Ascending aorta (tissue), 2 donors: ENCODE measurements at regions of chr7 and their contacts with region 1.

Region 1: DNA sequence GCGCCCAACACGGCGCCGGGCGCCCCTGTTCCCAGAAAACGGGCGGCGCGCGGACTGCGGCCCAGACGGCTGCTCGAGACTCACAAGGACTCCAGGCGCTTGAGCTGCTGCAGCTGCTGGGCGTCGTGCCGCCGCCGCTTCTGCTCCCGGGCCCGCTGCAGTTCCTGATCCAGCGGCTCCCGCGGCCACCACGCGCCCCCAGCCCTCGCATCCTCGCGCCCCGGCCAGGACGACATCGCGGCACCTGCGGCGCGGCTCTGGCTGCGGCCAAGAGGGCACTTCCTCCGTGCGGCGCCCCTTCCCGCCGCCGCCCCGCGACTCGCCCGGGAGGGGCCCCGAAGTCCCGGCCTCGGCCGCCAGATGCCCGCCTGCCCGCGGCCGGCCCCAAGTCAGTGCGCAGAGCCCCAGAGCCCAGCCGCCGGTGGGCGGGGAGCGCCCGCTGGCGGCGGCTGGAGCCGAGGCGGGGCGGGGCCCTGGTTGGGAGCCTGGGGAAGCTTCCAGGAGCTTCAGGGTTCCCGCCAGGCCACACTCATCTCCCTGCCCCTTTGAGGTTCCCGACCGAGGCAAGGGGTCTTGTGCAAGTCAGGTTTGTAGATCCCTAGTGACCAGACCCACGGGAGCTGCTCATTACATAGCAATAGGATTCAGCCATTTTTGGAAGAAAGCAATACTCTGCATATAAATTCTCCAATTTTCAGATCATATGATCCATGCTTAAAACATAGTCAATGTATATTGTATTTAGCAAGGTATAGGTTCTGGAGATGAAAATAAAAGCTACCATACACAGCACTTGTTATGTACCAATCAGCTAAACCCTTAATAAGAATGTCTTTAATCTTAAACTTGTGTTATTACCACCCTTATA is 14.2 kb upstream of the FKBP9 start:
- DNase-seq: peak; percentile 45 to 89
- H3K4me3 ChIP-seq: peak overlapping the region; percentile 92 to 100
- H3K27ac ChIP-seq: peak overlapping the region; percentile 88 to 98
- H3K4me1 ChIP-seq: peaks cover 3 to 10% of the 10 kb centered on the region in 2 donors
- H3K27me3 ChIP-seq: no peaks in the 10 kb centered on the region
- CTCF ChIP-seq: peak; percentile 38 to 75 (median 64)

Region 2: GRCh38 chr7:32495298-32496176 is 447.5 kb before region 1 on chr7 and contains the start of gene AVL9:
- intact Hi-C with region 1: loop called (anchors 5 kb)
- DNase-seq: peak; percentile 96 to 99
- H3K4me3 ChIP-seq: peak within 1 kb of the TSS; percentile 82 to 97
- H3K27ac ChIP-seq: peak within 1 kb of the TSS; percentile 98 to 99
- H3K4me1 ChIP-seq: peaks cover 7 to 13% of the 10 kb centered on the region in 2 donors
- H3K27me3 ChIP-seq: no peaks in the 10 kb centered on the region
- CTCF ChIP-seq: no peak
- total RNA-seq, gene AVL9: 78.3 TPM

Region 3: GRCh38 chr7:32803406-32804141 is 139.4 kb before region 1 on chr7:
- intact Hi-C with region 1: loop called (anchors 2 kb)
- DNase-seq: no peak
- H3K4me3 ChIP-seq: no peak overlapping the region
- H3K27ac ChIP-seq: no peak overlapping the region
- H3K4me1 ChIP-seq: no peaks in the 10 kb centered on the region
- H3K27me3 ChIP-seq: no peaks in the 10 kb centered on the region
- CTCF ChIP-seq: no peak

Region 4: DNA sequence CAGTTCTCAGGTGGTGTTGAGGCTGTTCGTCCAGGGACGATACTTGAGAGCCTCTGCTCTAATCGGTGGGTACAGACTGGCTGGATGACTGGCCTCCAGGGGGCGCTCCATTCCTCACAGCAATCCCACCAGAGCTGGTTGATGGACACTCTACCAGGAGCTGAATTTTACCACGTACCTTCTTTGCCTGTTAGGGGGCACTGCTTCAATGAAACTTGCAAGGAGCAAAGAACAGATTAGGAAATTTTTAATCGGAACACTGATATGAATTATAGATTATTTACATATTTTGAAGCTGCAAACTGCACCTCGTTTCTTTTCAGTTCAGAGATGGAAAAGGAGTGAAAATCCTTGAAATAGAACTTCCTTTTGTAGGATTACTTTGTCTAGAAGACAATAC is 96.3 kb before region 1 on chr7:
- intact Hi-C with region 1: loop called (anchors 2 kb)
- DNase-seq: peak; percentile 51 to 95
- H3K4me3 ChIP-seq: peak overlapping the region in 1 of 2 donors; percentile 19
- H3K27ac ChIP-seq: no peak overlapping the region
- H3K4me1 ChIP-seq: no peaks in the 10 kb centered on the region
- H3K27me3 ChIP-seq: no peaks in the 10 kb centered on the region
- CTCF ChIP-seq: peak; percentile 71 to 90 (median 87)

Region 5: DNA sequence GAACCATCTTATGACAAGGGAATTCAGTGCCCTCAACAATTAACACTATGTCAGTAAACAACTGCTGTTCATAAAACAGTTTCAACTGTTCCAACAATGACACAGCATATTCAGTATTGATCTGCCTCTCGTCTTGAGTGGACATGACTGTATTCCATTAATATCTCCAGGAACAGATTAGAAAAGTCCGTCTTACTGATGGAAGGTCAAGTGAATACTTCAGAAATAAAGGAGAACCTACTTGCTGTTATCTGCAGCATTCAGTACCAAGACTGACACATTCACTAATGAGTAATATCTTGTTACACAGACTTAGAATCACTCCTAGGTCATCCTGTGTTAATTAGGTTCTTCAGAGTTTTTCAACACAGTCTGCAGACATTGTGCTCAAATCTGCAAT is 63.6 kb before region 1 on chr7:
- intact Hi-C with region 1: no loop called
- DNase-seq: no peak
- H3K4me3 ChIP-seq: no peak overlapping the region
- H3K27ac ChIP-seq: peak overlapping the region in 1 of 2 donors; percentile 32
- H3K4me1 ChIP-seq: peaks cover 3 to 26% of the 10 kb centered on the region in 2 donors
- H3K27me3 ChIP-seq: no peaks in the 10 kb centered on the region
- CTCF ChIP-seq: no peak

Region 6: GRCh38 chr7:32921896-32922295 is 21.1 kb before region 1 on chr7:
- intact Hi-C with region 1: no loop called
- DNase-seq: no peak
- H3K4me3 ChIP-seq: no peak overlapping the region
- H3K27ac ChIP-seq: no peak overlapping the region
- H3K4me1 ChIP-seq: no peaks in the 10 kb centered on the region
- H3K27me3 ChIP-seq: no peaks in the 10 kb centered on the region
- CTCF ChIP-seq: no peak

Region 7: GRCh38 chr7:32957326-32958045 is 14.5 kb after region 1 on chr7 and contains the start of gene FKBP9:
- intact Hi-C with region 1: loop called (anchors 1 kb)
- DNase-seq: peak in 1 of 2 donors; percentile 84
- H3K4me3 ChIP-seq: peak within 1 kb of the TSS; percentile 72 to 97
- H3K27ac ChIP-seq: peak within 1 kb of the TSS; percentile 79 to 84
- H3K4me1 ChIP-seq: peaks cover 0 to 6% of the 10 kb centered on the region in 2 donors
- H3K27me3 ChIP-seq: no peaks in the 10 kb centered on the region
- CTCF ChIP-seq: no peak
- total RNA-seq, gene FKBP9: 302 TPM

Region 8: DNA sequence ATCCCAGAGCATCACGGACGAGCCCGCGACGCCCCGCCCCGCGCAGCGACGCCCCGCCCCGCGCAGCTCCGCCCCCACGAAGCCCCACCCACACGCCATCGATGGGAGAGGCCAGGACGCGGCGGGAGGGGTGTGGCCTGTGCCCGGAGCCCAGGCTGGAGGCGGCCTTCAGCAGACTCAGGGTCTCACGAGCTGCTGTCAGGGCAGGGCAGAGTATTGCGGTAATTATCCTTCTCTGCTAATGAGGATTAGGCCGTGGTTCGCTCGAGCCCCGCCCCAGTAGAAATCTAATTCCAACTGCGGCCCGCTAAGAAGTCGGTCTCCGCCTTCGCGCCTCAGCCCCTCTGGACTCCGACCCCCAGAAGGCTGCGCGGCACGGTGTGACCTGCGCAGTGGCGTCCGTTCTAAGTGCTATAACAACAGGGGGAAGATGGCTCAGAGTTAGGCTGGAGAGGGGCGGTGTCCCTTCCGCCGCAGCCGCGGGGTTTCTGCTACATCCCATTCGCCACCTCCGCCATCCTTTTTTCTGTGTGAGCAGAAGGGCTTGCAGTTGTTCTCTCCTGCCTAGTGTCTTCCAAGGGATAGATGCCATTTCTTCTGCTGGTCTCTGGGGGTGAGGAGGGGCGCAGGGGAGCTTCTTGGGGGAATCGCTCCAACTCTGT is 119.9 kb after region 1 on chr7:
- intact Hi-C with region 1: loop called (anchors 5 kb)
- DNase-seq: peak; percentile 81 to 94
- H3K4me3 ChIP-seq: peak overlapping the region; percentile 67 to 86
- H3K27ac ChIP-seq: peak overlapping the region; percentile 87 to 94
- H3K4me1 ChIP-seq: peaks cover 3 to 18% of the 10 kb centered on the region in 2 donors
- H3K27me3 ChIP-seq: no peaks in the 10 kb centered on the region
- CTCF ChIP-seq: no peak

Region 9: GRCh38 chr7:33128990-33129805 is 186.2 kb after region 1 on chr7 and contains the start of gene BBS9:
- intact Hi-C with region 1: loop called (anchors 1 kb)
- DNase-seq: peak; percentile 73 to 96
- H3K4me3 ChIP-seq: peak within 1 kb of the TSS; percentile 84 to 96
- H3K27ac ChIP-seq: peak within 1 kb of the TSS; percentile 30 to 77
- H3K4me1 ChIP-seq: peaks cover 0 to 8% of the 10 kb centered on the region in 2 donors
- H3K27me3 ChIP-seq: no peaks in the 10 kb centered on the region
- CTCF ChIP-seq: no peak
- total RNA-seq, gene BBS9: 23.3 TPM

Region 10: DNA sequence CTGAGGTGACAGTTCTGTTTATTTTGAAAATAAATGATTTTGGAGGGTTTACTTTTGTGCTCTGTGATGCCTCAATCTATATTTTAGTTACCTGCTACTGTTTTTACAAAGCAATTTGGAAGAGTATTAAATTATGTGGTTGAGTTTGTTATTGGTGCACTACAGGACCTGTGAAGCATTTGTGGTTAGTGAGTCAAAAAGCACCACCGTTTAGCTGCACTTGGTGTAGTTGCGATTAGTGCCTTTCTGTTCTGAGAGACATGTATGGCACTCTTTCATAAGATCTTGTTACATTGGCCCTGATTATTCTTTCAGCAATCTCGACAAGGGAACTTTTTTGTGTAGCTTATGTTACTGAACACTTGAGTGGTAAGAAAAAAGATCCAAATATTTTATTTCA is 318.6 kb after region 1 on chr7:
- intact Hi-C with region 1: no loop called
- DNase-seq: no peak
- H3K4me3 ChIP-seq: no peak overlapping the region
- H3K27ac ChIP-seq: no peak overlapping the region
- H3K4me1 ChIP-seq: no peaks in the 10 kb centered on the region
- H3K27me3 ChIP-seq: no peaks in the 10 kb centered on the region
- CTCF ChIP-seq: no peak

Region 11: GRCh38 chr7:33578166-33578565 is 635.1 kb after region 1 on chr7:
- intact Hi-C with region 1: no loop called
- DNase-seq: no peak
- H3K4me3 ChIP-seq: no peak overlapping the region
- H3K27ac ChIP-seq: no peak overlapping the region
- H3K4me1 ChIP-seq: no peaks in the 10 kb centered on the region
- H3K27me3 ChIP-seq: no peaks in the 10 kb centered on the region
- CTCF ChIP-seq: no peak